PC-3 (cell line): ENCODE measurements at regions of chr2 and their contacts with region 1.

Region 1: GRCh38 chr2:207625018-207625907 is at the start of gene METTL21A:
- DNase-seq: peak; percentile 94
- ATAC-seq: peak; percentile 78
- H3K4me3 ChIP-seq: peak within 1 kb of the TSS; percentile 80
- H3K27ac ChIP-seq: peak within 1 kb of the TSS; percentile 100
- H3K4me1 ChIP-seq: peaks cover 9% of the 10 kb centered on the region
- H3K27me3 ChIP-seq: no peaks in the 10 kb centered on the region
- CTCF ChIP-seq: no peak; the same call in 1 of the 2 replicates
- total RNA-seq, gene METTL21A: 35.3 and 66.3 TPM in 2 replicates

Region 2: DNA sequence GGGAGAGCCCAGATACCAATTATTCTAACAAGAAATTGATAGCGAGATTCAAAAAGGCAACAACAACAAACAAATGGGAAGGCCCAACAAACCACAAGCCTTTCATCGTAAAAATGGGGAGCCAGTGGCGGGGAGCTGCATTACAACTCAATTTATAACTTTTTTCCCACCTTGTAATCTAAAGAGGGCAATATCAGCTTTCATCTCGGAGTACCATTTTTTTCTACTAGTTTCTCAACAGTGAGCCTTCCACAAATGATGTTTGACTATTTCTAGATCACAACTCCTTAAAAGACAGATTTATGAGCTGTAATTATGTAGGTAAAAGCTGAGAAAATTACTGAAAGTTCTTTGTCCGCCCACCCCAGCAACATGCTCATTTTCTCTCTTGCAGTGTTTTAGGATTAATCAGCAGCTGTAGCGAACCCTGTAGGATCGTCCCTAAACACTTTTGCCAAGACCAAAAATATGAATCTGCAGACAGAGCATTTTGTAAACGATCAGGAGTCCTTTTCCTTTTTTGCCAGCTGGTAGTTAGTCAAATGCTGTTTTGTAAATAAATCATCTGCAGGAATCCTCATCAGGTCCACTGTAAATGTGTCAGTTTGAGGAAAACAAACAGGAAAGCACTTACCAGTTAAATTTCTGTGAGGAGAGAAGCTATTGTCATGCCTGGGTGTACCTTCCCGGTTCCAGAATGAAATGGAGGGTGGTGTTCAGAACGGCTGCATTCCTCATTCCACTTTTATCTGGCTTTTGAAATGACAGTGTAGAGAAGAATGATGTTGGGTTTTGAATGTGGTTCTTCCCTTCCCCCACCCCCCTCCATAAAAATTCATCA is 1412.4 kb before region 1 on chr2:
- CTCF ChIA-PET with region 1: no interaction called
- POLR2A ChIA-PET with region 1: no interaction called
- intact Hi-C with region 1: no loop called
- DNase-seq: peak; percentile 64
- ATAC-seq: peak; percentile 80
- H3K4me3 ChIP-seq: peak overlapping the region; percentile 62
- H3K27ac ChIP-seq: peak overlapping the region; percentile 4
- H3K4me1 ChIP-seq: peaks cover 27% of the 10 kb centered on the region
- H3K27me3 ChIP-seq: peaks cover 3% of the 10 kb centered on the region; the same call in 1 of the 2 replicates
- CTCF ChIP-seq: no peak

Region 3: DNA sequence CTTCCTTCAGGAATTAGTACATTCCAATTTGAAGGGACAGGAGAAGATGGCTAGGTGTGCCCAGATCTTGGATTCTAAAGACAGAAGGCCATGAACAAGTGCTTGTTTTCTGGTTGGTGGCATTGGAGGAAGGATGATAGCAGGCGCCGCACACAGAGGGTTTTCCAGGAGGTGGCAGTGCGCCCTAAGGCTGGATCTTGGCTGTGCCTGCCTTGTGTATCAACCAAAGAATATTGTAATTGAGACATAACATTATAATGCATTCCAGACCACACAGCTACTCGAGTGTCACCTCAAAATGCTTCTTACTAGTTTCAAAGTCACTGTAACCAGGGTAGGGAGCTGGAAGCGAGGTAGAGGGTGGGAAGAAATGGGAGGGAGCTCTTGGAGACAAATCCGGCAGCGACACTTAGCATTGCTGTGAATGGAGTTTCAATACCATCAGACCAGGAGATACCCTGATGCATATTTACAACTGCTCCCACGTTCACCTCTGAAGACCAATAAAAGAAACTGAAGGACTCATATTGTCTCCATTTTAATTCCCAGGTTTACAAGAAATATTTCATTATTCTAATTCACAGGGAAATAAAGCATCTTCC is 643.4 kb before region 1 on chr2:
- CTCF ChIA-PET with region 1: no interaction called
- POLR2A ChIA-PET with region 1: no interaction called
- intact Hi-C with region 1: loop called (anchors 10 kb)
- DNase-seq: peak; percentile 82
- ATAC-seq: peak; percentile 82
- H3K4me3 ChIP-seq: no peak overlapping the region
- H3K27ac ChIP-seq: no peak overlapping the region
- H3K4me1 ChIP-seq: peaks cover 30% of the 10 kb centered on the region
- H3K27me3 ChIP-seq: no peaks in the 10 kb centered on the region
- CTCF ChIP-seq: peak; percentile 93

Region 4: GRCh38 chr2:207584952-207585351 is 40.3 kb before region 1 on chr2:
- CTCF ChIA-PET with region 1: no interaction called
- POLR2A ChIA-PET with region 1: no interaction called
- intact Hi-C with region 1: loop called (anchors 2 kb)
- DNase-seq: no peak
- ATAC-seq: no peak
- H3K4me3 ChIP-seq: no peak overlapping the region
- H3K27ac ChIP-seq: no peak overlapping the region
- H3K4me1 ChIP-seq: 0 out of 2 replicates have a peak, but pooled peaks cover under 1% of the 10 kb centered on the region
- H3K27me3 ChIP-seq: no peaks in the 10 kb centered on the region
- CTCF ChIP-seq: no peak

Region 5: DNA sequence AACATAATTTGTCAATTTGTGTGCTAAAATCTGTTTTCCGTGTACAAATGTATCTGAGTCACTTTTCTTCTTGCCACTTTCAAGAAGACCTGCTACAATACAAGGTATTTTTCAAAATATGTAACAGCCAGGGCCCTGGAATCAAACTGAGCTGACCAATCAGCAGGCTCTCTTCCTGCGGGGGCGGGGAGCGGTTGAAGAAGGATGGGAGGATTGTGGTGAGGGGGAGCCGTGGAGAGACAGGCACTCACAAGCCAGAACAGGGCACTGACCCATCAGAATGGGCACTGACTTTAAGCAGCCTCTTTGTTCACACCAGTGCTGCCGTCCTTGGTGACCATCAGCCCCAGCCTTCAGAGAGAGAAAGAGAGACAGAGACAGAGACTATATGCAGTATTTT is 45.6 kb after region 1 on chr2:
- CTCF ChIA-PET with region 1: no interaction called
- POLR2A ChIA-PET with region 1: no interaction called
- intact Hi-C with region 1: no loop called
- DNase-seq: no peak
- ATAC-seq: no peak
- H3K4me3 ChIP-seq: no peak overlapping the region
- H3K27ac ChIP-seq: no peak overlapping the region
- H3K4me1 ChIP-seq: no peaks in the 10 kb centered on the region
- H3K27me3 ChIP-seq: no peaks in the 10 kb centered on the region
- CTCF ChIP-seq: no peak

Region 6: DNA sequence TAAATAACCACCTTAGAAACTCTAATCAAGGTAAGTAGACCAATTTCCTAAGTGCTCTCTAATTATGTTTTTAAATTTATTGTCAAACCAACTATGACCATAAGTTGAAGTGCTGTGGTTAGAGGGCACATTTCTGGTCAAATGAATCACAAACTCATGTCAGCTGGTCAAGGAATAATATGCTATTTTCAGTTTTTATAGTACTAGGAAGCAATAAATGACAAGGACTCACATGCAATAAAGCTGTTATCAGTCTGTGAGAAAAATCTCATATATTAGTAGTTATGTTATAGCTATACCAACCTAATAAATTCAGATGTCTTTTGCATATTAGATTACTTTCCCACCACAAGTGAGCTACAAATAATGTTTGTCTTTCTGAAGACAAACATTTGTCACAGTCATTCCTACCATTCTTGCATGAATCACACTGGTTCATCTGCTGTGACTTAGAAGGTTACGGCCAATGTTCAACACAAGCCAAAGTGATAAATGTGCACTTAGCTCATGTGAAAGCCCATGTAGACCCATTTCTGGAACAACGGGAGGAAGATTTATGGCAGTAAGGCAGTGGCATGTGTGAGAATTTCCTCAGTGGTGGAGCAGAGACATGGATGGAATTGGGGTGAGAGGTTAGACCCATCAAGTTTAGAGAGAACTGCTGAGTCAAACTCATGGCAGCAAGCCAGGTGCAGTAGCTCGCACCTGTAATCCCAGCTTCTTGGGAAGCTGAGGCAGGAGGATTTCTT is 58.8 kb after region 1 on chr2:
- CTCF ChIA-PET with region 1: interaction called, 5 read pairs
- POLR2A ChIA-PET with region 1: interaction called, 3 read pairs
- intact Hi-C with region 1: loop called (anchors 2 kb)
- DNase-seq: peak; percentile 96
- ATAC-seq: peak; percentile 87
- H3K4me3 ChIP-seq: peak overlapping the region; percentile 9; the same call in 1 of the 2 replicates
- H3K27ac ChIP-seq: peak overlapping the region; percentile 94
- H3K4me1 ChIP-seq: peaks cover 23% of the 10 kb centered on the region
- H3K27me3 ChIP-seq: no peaks in the 10 kb centered on the region
- CTCF ChIP-seq: no peak

Region 7: DNA sequence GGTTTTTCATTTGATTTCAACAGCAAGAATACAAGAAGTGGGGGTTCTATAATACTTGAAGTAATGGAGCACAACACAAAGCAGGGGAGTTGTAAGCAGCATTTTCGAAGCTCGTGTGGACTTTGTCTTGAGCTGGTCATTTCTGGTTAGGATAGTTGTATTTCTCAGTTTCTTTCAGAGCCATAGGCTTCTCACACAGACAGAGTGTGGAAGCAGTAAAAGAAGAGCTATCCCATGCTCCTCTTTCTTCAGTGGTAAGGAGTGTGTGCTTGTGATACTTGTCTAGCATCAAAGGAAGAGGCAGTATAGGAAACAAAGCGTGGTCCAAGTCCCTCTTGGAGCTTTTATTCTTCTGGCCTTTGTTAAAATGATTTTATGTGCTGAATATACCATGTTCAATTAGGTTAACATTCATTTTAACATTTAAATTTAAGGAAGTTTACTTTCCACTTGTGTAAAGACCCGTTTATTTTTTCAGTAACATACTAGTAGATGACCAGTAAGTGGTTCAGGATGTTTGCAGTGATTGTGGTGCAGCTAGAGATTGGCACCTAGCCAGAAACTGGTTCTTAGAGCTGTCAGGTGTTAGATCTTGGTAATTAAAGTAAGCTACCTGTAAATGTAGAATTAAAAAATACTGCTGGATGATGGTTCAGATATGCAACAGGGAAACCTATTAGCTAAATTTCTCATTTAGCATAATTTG is 100.8 kb after region 1 on chr2:
- CTCF ChIA-PET with region 1: interaction called, 3 read pairs
- POLR2A ChIA-PET with region 1: no interaction called
- intact Hi-C with region 1: loop called (anchors 2 kb)
- DNase-seq: peak; percentile 35
- ATAC-seq: peak; percentile 26
- H3K4me3 ChIP-seq: no peak overlapping the region
- H3K27ac ChIP-seq: peak overlapping the region; percentile 54; the same call in 1 of the 2 replicates
- H3K4me1 ChIP-seq: peaks cover 49% of the 10 kb centered on the region
- H3K27me3 ChIP-seq: no peaks in the 10 kb centered on the region
- CTCF ChIP-seq: no peak

Region 8: GRCh38 chr2:207836521-207837133 is 211.4 kb after region 1 on chr2:
- CTCF ChIA-PET with region 1: no interaction called
- POLR2A ChIA-PET with region 1: no interaction called
- intact Hi-C with region 1: no loop called
- DNase-seq: no peak
- ATAC-seq: no peak
- H3K4me3 ChIP-seq: no peak overlapping the region
- H3K27ac ChIP-seq: no peak overlapping the region
- H3K4me1 ChIP-seq: peaks cover 8% of the 10 kb centered on the region; the same call in 1 of the 2 replicates
- H3K27me3 ChIP-seq: no peaks in the 10 kb centered on the region
- CTCF ChIP-seq: no peak

Region 9: DNA sequence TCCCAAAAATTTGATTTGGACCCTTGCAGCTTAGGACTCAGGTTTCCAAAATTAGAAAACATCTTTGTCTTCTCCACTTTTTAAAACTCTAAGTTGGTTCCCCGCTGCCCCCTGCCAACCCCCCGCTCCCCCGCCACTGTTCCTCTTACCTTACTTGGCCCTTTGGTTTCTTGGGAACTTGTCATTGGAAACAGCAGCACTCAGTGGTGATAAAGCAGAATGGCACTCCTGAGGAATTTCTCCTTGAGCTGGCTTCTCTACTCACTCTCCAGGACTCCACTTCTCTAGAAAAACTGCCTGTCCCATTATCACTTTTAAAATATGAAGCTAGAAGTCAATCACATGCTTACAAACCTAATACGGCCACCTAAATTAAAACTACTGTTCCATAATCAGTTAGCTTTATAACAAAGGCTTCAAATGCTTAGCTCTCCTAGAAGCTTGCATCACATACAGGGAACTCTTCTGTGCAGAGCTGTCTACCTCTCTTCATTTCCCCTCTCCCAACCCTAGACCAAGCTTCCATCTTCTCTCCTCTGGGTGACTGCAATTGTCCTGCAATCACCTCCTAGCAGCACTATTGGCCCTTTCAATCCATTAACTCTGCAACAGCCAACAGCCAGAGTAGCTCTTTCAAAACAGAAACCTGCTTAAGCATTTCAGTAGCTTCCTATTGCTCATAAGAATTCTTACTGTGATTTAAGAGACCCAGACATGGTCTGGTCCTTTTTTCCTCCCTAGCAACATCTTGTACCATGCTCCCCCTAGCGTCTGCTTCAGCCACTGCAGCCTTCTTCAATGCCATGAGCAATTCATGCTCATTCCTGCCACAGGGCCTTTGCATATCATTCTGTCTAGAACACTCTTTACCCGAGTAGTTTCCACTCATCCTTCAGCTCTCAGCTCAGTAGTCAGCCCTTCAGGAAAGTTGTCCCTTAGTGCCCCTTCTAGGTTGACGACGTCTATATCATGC is 415.2 kb after region 1 on chr2:
- CTCF ChIA-PET with region 1: no interaction called
- POLR2A ChIA-PET with region 1: no interaction called
- intact Hi-C with region 1: loop called (anchors 5 kb)
- DNase-seq: peak; percentile 77
- ATAC-seq: peak; percentile 86
- H3K4me3 ChIP-seq: no peak overlapping the region
- H3K27ac ChIP-seq: no peak overlapping the region
- H3K4me1 ChIP-seq: peaks cover 6% of the 10 kb centered on the region; the same call in 1 of the 2 replicates
- H3K27me3 ChIP-seq: no peaks in the 10 kb centered on the region
- CTCF ChIP-seq: peak; percentile 74